ENCODE measurements at regions of chr7 and their contacts with region 1.

Region 1: GRCh38 chr7:141014524-141015395 is at the start of gene MRPS33:
- DNase-seq: peak; percentile 86
- ATAC-seq: peak; percentile 98
- H3K4me3 Mint-ChIP-seq: peak within 1 kb of the TSS; percentile 99
- H3K27ac Mint-ChIP-seq: peak within 1 kb of the TSS; percentile 100
- H3K4me1 Mint-ChIP-seq: peaks cover 20% of the 10 kb centered on the region
- H3K27me3 Mint-ChIP-seq: peaks cover 13% of the 10 kb centered on the region
- CTCF ChIP-seq: no peak
- total RNA-seq, gene MRPS33: 37.5 and 46.4 TPM in 2 replicates

Region 2: GRCh38 chr7:139133335-139134139 is 1881.2 kb before region 1 on chr7:
- CTCF ChIA-PET with region 1: no interaction called
- POLR2A ChIA-PET with region 1: no interaction called
- intact Hi-C with region 1: loop called (anchors 10 kb)
- DNase-seq: peak; percentile 77
- ATAC-seq: peak; percentile 98
- H3K4me3 Mint-ChIP-seq: peak overlapping the region; percentile 87
- H3K27ac Mint-ChIP-seq: peak overlapping the region; percentile 81
- H3K4me1 Mint-ChIP-seq: peaks cover 9% of the 10 kb centered on the region
- H3K27me3 Mint-ChIP-seq: no peaks in the 10 kb centered on the region
- CTCF ChIP-seq: no peak

Region 3: GRCh38 chr7:140653319-140654108 is 361.2 kb before region 1 on chr7:
- CTCF ChIA-PET with region 1: interaction called, 4 read pairs
- POLR2A ChIA-PET with region 1: no interaction called
- intact Hi-C with region 1: loop called (anchors 5 kb)
- DNase-seq: peak; percentile 28
- ATAC-seq: no peak
- H3K4me3 Mint-ChIP-seq: no peak overlapping the region
- H3K27ac Mint-ChIP-seq: no peak overlapping the region
- H3K4me1 Mint-ChIP-seq: peaks cover 20% of the 10 kb centered on the region
- H3K27me3 Mint-ChIP-seq: peaks cover 2% of the 10 kb centered on the region
- CTCF ChIP-seq: peak; percentile 31

Region 4: GRCh38 chr7:140696680-140697446 is 317.9 kb before region 1 on chr7 and contains the start of gene NDUFB2:
- CTCF ChIA-PET with region 1: no interaction called
- POLR2A ChIA-PET with region 1: interaction called, 8 read pairs
- intact Hi-C with region 1: loop called (anchors 1 kb)
- DNase-seq: peak; percentile 90
- ATAC-seq: peak; percentile 86
- H3K4me3 Mint-ChIP-seq: peak within 1 kb of the TSS; percentile 94
- H3K27ac Mint-ChIP-seq: peak within 1 kb of the TSS; percentile 98
- H3K4me1 Mint-ChIP-seq: peaks cover 34% of the 10 kb centered on the region
- H3K27me3 Mint-ChIP-seq: no peaks in the 10 kb centered on the region
- CTCF ChIP-seq: no peak
- total RNA-seq, gene NDUFB2: 140 and 168 TPM in 2 replicates

Region 5: GRCh38 chr7:140876519-140877248 is 138.1 kb before region 1 on chr7:
- CTCF ChIA-PET with region 1: no interaction called
- POLR2A ChIA-PET with region 1: no interaction called
- intact Hi-C with region 1: no loop called
- DNase-seq: no peak
- ATAC-seq: no peak
- H3K4me3 Mint-ChIP-seq: no peak overlapping the region
- H3K27ac Mint-ChIP-seq: no peak overlapping the region
- H3K4me1 Mint-ChIP-seq: peaks cover 57% of the 10 kb centered on the region
- H3K27me3 Mint-ChIP-seq: no peaks in the 10 kb centered on the region
- CTCF ChIP-seq: no peak

Region 6: DNA sequence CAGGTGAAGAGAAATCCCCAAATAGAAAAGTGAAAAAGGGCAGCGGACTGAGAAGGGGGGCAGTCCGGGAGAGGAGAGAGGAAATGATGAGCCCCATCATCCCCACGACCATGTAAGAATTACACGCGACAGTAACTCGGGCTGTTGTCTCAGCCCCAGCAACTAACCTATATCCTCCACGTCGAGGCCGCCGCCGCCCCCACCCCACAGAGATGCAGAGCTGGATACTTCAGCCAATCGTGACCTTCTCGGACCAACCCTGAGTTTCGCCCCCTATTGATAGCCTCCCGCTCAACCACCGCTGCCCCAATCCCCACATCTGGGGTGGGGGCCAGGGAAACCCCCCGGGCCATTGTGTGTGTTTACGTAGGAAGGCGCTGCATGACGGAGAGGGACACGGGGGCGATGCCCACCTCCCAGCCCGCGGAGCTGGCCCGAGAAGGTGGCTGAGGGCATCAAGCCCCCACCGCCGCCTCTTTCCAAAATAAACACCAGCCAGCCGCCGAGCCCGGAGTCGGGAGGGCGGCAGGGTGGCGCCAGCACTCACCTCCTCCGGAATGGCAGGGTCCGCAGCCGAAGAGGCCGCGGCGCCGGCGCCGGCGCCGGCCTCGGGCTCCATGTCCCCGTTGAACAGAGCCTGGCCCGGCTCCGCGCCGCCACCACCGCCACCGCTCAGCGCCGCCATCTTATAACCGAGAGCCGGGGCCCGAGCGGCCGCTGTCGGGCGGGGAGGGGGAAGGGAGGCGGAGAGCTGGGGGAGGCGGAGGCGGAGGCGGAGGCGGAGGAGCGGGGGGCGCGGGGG is 90.5 kb before region 1 on chr7:
- CTCF ChIA-PET with region 1: interaction called, 4 read pairs
- POLR2A ChIA-PET with region 1: interaction called, 14 read pairs
- intact Hi-C with region 1: loop called (anchors 1 kb)
- DNase-seq: peak; percentile 71
- ATAC-seq: peak; percentile 75
- H3K4me3 Mint-ChIP-seq: no peak overlapping the region
- H3K27ac Mint-ChIP-seq: no peak overlapping the region
- H3K4me1 Mint-ChIP-seq: peaks cover 28% of the 10 kb centered on the region
- H3K27me3 Mint-ChIP-seq: no peaks in the 10 kb centered on the region
- CTCF ChIP-seq: no peak

Region 7: DNA sequence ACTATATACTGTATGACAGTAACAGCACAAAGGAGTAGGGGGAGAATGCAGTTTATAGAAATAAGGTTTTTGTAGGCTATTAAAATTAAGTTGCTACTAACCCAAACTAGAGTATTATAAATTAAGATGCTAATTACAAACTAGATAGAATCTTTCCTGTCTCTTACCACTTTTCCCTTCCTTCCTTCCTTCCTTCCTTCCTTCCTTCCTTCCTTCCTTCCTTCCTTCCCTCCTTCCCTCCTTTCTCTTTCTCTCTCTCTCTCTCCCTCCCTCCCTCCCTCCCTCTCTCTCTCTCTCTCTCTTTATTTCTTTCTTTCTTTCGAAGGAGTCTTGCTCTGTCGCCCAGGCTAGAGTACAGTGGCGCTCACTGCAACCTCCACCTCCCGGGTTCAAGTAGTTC is 53.6 kb before region 1 on chr7:
- CTCF ChIA-PET with region 1: no interaction called
- POLR2A ChIA-PET with region 1: no interaction called
- intact Hi-C with region 1: no loop called
- DNase-seq: no peak
- ATAC-seq: no peak
- H3K4me3 Mint-ChIP-seq: no peak overlapping the region
- H3K27ac Mint-ChIP-seq: no peak overlapping the region
- H3K4me1 Mint-ChIP-seq: no peaks in the 10 kb centered on the region
- H3K27me3 Mint-ChIP-seq: no peaks in the 10 kb centered on the region
- CTCF ChIP-seq: no peak

Region 8: DNA sequence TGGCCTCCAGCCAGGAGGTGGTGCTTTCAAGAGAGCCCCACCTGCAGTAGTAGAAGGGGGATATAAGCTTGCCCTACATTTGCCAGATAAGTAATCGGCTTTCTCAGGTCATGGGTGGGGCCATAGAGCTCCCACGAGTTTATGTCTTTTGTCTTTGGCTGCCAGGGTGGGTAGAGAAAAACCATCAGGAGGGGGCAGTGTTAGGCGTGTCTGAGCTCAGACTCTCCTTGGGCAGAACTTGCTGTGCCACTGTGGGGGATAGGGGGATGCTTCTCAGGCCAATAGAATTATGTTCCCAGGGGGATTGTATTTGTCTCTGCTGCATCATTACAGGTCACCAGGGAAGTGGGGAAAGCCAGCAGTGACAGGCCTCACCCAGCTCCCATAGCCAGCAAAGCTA is 12.3 kb after region 1 on chr7:
- CTCF ChIA-PET with region 1: no interaction called
- POLR2A ChIA-PET with region 1: no interaction called
- intact Hi-C with region 1: no loop called
- DNase-seq: no peak
- ATAC-seq: no peak
- H3K4me3 Mint-ChIP-seq: no peak overlapping the region
- H3K27ac Mint-ChIP-seq: no peak overlapping the region
- H3K4me1 Mint-ChIP-seq: no peaks in the 10 kb centered on the region
- H3K27me3 Mint-ChIP-seq: peaks cover 42% of the 10 kb centered on the region
- CTCF ChIP-seq: no peak

Region 9: GRCh38 chr7:141133646-141134045 is 118.9 kb after region 1 on chr7:
- CTCF ChIA-PET with region 1: no interaction called
- POLR2A ChIA-PET with region 1: no interaction called
- intact Hi-C with region 1: no loop called
- DNase-seq: no peak
- ATAC-seq: no peak
- H3K4me3 Mint-ChIP-seq: no peak overlapping the region
- H3K27ac Mint-ChIP-seq: no peak overlapping the region
- H3K4me1 Mint-ChIP-seq: no peaks in the 10 kb centered on the region
- H3K27me3 Mint-ChIP-seq: peaks cover 6% of the 10 kb centered on the region
- CTCF ChIP-seq: no peak

Region 10: GRCh38 chr7:141551094-141551781 is 536.5 kb after region 1 on chr7 and contains the start of gene AGK:
- CTCF ChIA-PET with region 1: no interaction called
- POLR2A ChIA-PET with region 1: interaction called, 7 read pairs
- intact Hi-C with region 1: loop called (anchors 1 kb)
- DNase-seq: peak; percentile 69
- ATAC-seq: peak; percentile 94
- H3K4me3 Mint-ChIP-seq: peak within 1 kb of the TSS; percentile 90
- H3K27ac Mint-ChIP-seq: peak within 1 kb of the TSS; percentile 54
- H3K4me1 Mint-ChIP-seq: peaks cover 29% of the 10 kb centered on the region
- H3K27me3 Mint-ChIP-seq: no peaks in the 10 kb centered on the region
- CTCF ChIP-seq: no peak
- total RNA-seq, gene AGK: 35.1 and 39.3 TPM in 2 replicates